ENCODE measurements at regions of chr4 and their contacts with region 1.

Region 1: DNA sequence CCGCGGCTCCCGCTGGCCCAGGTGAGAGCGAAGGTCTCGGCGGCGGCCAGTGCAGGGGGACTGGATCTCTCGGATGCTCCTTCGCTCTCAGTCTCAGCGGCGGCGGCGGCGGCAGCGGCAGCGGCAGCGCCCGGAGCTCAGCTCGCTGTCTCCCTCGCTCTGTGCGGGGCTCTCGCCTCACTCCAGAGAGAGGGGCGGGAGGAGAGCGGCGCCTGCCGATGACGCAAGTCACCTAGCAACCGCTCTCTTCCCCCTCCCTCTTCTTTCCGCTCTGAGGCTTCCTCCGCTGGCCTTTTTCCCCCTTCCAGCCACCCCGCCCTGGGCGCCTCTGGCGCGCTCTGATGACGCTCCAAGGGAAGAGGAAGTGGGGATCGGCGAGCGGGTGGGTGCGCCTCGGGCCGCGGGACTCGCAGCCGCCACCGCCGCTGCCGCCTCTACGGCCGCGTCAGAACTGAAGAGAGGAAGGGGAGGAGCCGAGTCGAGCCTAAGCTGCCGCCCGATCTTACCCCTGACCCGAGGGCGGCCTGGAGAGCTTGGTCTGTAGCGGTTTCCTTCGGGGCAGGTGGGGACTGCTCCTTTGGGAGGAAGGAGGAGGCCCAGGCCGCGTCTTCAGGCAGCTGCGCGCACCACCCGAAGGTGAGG is at the start of gene FBXW7:
- DNase-seq: peak; percentile 98 to 100 (median 99)
- ATAC-seq: peak; percentile 79
- H3K4me3 ChIP-seq: peak within 1 kb of the TSS; percentile 84
- H3K4me3 Mint-ChIP-seq: peak within 1 kb of the TSS; percentile 97
- H3K27ac ChIP-seq: peak within 1 kb of the TSS; percentile 90 to 98
- H3K27ac Mint-ChIP-seq: peak within 1 kb of the TSS; percentile 94
- H3K4me1 ChIP-seq: peaks cover 36% of the 10 kb centered on the region
- H3K4me1 Mint-ChIP-seq: peaks cover 66% of the 10 kb centered on the region
- H3K27me3 ChIP-seq: no peaks in the 10 kb centered on the region
- H3K27me3 Mint-ChIP-seq: no peaks in the 10 kb centered on the region
- CTCF ChIP-seq: no peak
- total RNA-seq, gene FBXW7: 128 to 140 TPM

Region 2: GRCh38 chr4:151015459-151016347 is 1520.3 kb before region 1 on chr4:
- CTCF ChIA-PET with region 1: no interaction called
- POLR2A ChIA-PET with region 1: interaction called, 5 read pairs
- intact Hi-C with region 1: loop called in 1 of 2 experiments (anchors 10 kb)
- DNase-seq: peak; percentile 65 to 95 (median 78)
- ATAC-seq: peak; percentile 72
- H3K4me3 ChIP-seq: peak overlapping the region; percentile 83
- H3K4me3 Mint-ChIP-seq: peak overlapping the region; percentile 100
- H3K27ac ChIP-seq: peak overlapping the region; percentile 91 to 97
- H3K27ac Mint-ChIP-seq: peak overlapping the region; percentile 98
- H3K4me1 ChIP-seq: peaks cover 28% of the 10 kb centered on the region
- H3K4me1 Mint-ChIP-seq: peaks cover 40% of the 10 kb centered on the region
- H3K27me3 ChIP-seq: no peaks in the 10 kb centered on the region
- H3K27me3 Mint-ChIP-seq: no peaks in the 10 kb centered on the region
- CTCF ChIP-seq: no peak

Region 3: DNA sequence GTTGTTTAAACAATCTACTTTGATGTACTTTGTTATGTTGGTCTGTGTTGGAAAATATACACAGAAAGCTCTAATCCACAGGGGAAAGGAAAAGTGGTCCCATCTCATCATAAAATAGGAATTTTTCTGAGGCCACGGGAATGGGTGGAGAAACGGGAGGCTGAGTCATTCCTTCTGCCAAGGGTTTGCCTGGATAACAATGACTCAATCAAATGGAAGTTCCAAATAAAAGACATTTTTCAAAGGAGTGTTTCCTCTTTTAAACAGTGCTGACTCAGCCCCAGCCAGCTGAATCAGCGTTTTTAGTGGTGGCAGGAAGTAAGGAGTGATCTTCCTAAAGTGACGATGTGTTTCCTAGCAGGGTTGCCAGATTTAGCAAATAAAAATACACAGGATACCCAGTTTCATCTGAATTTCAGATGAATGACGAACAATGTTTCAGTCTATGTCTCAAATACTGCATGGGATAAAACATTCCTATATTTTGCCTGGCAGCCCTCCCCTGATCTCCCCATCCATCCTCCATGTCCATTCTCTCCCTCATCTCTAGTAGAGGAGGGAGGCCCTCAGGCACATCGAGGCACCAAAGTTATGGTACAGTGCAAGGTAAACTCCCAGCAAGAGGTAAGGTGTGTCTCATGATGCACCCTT is 429.8 kb before region 1 on chr4:
- CTCF ChIA-PET with region 1: no interaction called
- POLR2A ChIA-PET with region 1: interaction called, 7 read pairs
- intact Hi-C with region 1: loop called in 1 of 2 experiments (anchors 10 kb)
- DNase-seq: peak in 4 of 14 experiments; percentile 46 to 72 (median 51)
- ATAC-seq: no peak
- H3K4me3 ChIP-seq: no peak overlapping the region
- H3K4me3 Mint-ChIP-seq: peak overlapping the region; percentile 65
- H3K27ac ChIP-seq: no peak overlapping the region
- H3K27ac Mint-ChIP-seq: peak overlapping the region; percentile 95
- H3K4me1 ChIP-seq: peaks cover 84% of the 10 kb centered on the region
- H3K4me1 Mint-ChIP-seq: peaks cover 92% of the 10 kb centered on the region
- H3K27me3 ChIP-seq: no peaks in the 10 kb centered on the region
- H3K27me3 Mint-ChIP-seq: no peaks in the 10 kb centered on the region
- CTCF ChIP-seq: no peak

Region 4: GRCh38 chr4:152525873-152526272 is 10.2 kb before region 1 on chr4:
- CTCF ChIA-PET with region 1: no interaction called
- POLR2A ChIA-PET with region 1: interaction called, 41 read pairs
- intact Hi-C with region 1: no loop called
- DNase-seq: no peak
- ATAC-seq: no peak
- H3K4me3 ChIP-seq: no peak overlapping the region
- H3K4me3 Mint-ChIP-seq: no peak overlapping the region
- H3K27ac ChIP-seq: no peak overlapping the region
- H3K27ac Mint-ChIP-seq: no peak overlapping the region
- H3K4me1 ChIP-seq: peaks cover 6% of the 10 kb centered on the region
- H3K4me1 Mint-ChIP-seq: peaks cover 74% of the 10 kb centered on the region
- H3K27me3 ChIP-seq: no peaks in the 10 kb centered on the region
- H3K27me3 Mint-ChIP-seq: no peaks in the 10 kb centered on the region
- CTCF ChIP-seq: no peak

Region 5: DNA sequence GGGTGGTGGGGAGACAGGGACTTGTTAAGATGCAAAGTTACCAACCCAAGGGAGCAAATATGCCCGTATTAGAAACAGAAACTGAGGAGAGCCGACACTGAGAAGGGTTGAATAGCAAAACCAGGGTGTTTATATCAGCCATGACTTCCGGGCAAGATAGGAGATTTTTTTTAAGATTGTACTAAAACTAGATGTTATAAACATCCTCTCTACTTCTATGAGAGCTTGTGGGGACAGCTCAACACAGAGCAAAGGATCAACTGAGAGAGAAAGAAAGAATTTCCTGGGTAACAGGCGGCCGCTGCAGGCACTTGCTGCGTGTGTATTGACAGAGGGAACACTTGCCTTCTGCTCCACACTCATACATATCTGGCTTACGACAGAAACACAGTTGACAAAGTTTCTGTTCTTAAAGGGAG is 49.0 kb after region 1 on chr4:
- CTCF ChIA-PET with region 1: no interaction called
- POLR2A ChIA-PET with region 1: interaction called, 41 read pairs
- intact Hi-C with region 1: loop called (anchors 5 kb)
- DNase-seq: peak in 5 of 14 experiments; percentile 6 to 64 (median 29)
- ATAC-seq: peak; percentile 62
- H3K4me3 ChIP-seq: peak overlapping the region; percentile 30
- H3K4me3 Mint-ChIP-seq: peak overlapping the region; percentile 77
- H3K27ac ChIP-seq: peak overlapping the region in 1 of 2 donors; percentile 39
- H3K27ac Mint-ChIP-seq: peak overlapping the region; percentile 88
- H3K4me1 ChIP-seq: peaks cover 25% of the 10 kb centered on the region
- H3K4me1 Mint-ChIP-seq: peaks cover 24% of the 10 kb centered on the region
- H3K27me3 ChIP-seq: no peaks in the 10 kb centered on the region
- H3K27me3 Mint-ChIP-seq: peaks cover under 1% of the 10 kb centered on the region
- CTCF ChIP-seq: no peak

Region 6: DNA sequence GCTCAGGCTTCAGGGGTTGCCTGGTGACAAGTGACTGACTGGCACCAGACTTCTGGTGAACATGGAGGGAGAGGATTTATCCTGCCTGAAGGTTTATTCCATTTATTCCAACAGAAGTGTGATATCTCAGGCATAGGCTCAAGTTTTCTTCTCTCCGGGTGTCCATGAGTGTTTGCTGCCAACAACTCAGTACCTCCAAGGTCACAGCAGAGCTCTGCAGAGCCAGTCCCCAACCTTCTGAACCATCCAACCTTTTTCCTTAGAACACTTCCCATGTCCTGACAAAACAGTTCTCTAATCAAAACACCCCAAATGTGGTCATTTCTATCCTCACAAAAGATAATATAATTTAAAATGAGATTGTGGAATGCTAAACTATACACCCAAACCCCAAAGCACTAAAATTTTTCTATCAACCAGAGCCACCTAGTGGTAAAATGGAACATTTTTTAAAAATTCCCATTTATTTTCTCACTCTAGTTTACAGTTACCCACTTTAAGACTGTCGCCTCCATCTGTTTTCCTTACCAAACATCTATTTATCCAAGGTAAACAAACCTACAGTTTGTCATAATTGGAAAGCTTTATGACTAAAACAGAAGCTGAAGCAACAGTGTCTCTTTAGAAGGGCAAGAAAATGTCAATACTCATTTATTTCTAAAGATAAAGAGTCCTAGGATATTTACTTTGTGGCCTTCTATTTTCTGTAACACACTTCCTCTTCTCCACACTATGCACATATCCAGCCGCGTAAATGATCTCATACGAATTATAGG is 104.2 kb after region 1 on chr4:
- CTCF ChIA-PET with region 1: interaction called, 3 read pairs
- POLR2A ChIA-PET with region 1: interaction called, 8 read pairs
- intact Hi-C with region 1: loop called in 1 of 2 experiments (anchors 1 kb)
- DNase-seq: peak in 3 of 14 experiments; percentile 39 to 47 (median 41)
- ATAC-seq: peak; percentile 56
- H3K4me3 ChIP-seq: no peak overlapping the region
- H3K4me3 Mint-ChIP-seq: no peak overlapping the region
- H3K27ac ChIP-seq: no peak overlapping the region
- H3K27ac Mint-ChIP-seq: no peak overlapping the region
- H3K4me1 ChIP-seq: peaks cover 16% of the 10 kb centered on the region
- H3K4me1 Mint-ChIP-seq: peaks cover 22% of the 10 kb centered on the region
- H3K27me3 ChIP-seq: no peaks in the 10 kb centered on the region
- H3K27me3 Mint-ChIP-seq: no peaks in the 10 kb centered on the region
- CTCF ChIP-seq: peak; percentile 87

Region 7: GRCh38 chr4:153115322-153116290 is 579.6 kb after region 1 on chr4:
- CTCF ChIA-PET with region 1: no interaction called
- POLR2A ChIA-PET with region 1: no interaction called
- intact Hi-C with region 1: loop called in 1 of 2 experiments (anchors 2 kb)
- DNase-seq: peak; percentile 43 to 92 (median 62)
- ATAC-seq: peak; percentile 54
- H3K4me3 ChIP-seq: peak overlapping the region; percentile 20
- H3K4me3 Mint-ChIP-seq: no peak overlapping the region
- H3K27ac ChIP-seq: peak overlapping the region; percentile 66
- H3K27ac Mint-ChIP-seq: no peak overlapping the region
- H3K4me1 ChIP-seq: peaks cover 66% of the 10 kb centered on the region
- H3K4me1 Mint-ChIP-seq: peaks cover 15% of the 10 kb centered on the region
- H3K27me3 ChIP-seq: no peaks in the 10 kb centered on the region
- H3K27me3 Mint-ChIP-seq: no peaks in the 10 kb centered on the region
- CTCF ChIP-seq: no peak